ENCODE measurements at regions of chr5 and their contacts with region 1.

Region 1: GRCh38 chr5:137075163-137075970 is 423.8 kb downstream of the SPOCK1 start:
- DNase-seq: no peak
- H3K4me3 ChIP-seq: no peak overlapping the region
- CTCF ChIP-seq: peak; percentile 70

Region 2: GRCh38 chr5:137086342-137086741 is 11.0 kb after region 1 on chr5:
- CTCF ChIA-PET with region 1: interaction called, 13 read pairs
- POLR2A ChIA-PET with region 1: no interaction called
- DNase-seq: no peak
- H3K4me3 ChIP-seq: no peak overlapping the region
- CTCF ChIP-seq: no peak

Region 3: DNA sequence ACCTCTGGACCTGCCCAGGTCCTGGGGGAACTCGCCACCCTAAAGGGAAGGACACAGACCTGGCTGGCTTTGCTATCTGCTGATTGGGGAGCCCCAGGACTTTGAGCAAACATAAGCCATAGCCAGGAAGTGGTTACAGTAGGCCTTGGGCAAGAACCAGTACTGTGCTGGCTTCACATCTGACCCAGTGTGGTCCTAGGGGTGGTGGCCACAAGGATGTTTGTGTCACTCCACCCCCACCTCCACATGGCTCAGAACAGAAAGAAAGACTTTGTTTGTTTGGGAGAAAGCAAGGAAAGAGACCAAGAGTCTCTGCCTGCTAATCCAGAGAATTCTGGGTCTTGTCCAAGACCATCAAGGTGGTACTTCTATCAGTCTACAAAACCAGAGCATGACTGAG is 89.6 kb after region 1 on chr5:
- CTCF ChIA-PET with region 1: no interaction called
- POLR2A ChIA-PET with region 1: no interaction called
- DNase-seq: no peak
- H3K4me3 ChIP-seq: no peak overlapping the region
- CTCF ChIP-seq: no peak